ENCODE measurements at regions of chr20 and their contacts with region 1.

Region 1: DNA sequence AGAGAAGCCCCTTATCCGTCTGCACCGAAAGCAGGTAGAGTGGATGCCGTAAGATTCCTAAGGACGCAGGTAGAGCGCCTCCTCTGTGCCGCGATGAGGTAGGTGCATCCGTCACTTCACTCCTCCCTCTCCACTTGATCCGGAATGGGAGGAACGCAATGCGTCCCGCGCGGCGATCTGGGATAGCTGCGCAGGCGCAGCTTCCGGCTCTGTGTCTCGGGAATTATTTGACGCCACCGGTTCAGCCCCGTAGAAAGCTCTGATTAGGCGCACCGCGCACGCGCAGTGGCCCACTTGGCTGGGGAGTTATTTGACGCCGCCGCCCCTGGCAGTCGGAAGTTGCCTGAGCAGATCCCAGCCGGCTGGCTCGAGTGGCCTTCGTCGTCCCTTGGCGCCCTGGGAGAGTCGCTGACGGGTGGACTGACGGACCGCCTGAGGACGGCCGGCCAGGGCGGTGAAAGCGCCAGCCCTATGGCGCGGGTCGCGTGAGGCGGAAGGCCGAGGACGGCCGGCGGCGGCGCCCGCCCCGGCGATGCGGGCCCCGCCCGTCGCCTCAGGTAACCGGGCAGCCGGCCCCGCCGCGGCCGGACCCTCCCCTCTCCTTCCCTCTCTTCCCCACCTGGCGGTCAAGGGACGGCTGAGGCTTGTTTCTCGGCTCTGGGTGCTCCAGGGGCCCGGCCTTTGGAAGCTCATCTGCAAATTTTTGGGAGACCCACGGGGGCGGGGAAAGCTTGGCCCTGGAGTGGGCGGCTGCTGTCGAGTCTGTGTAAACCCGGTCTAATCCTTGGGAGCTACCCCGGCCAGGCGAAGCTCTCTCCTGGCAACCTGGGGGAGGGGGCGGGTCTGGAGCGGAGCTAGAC is at the start of gene RALGAPB:
- DNase-seq: peak; percentile 96 to 100
- H3K4me3 ChIP-seq: peak within 1 kb of the TSS; percentile 93 to 99
- H3K27ac ChIP-seq: peak within 1 kb of the TSS; percentile 88 to 93
- H3K4me1 ChIP-seq: peaks cover 12 to 15% of the 10 kb centered on the region in 2 donors
- H3K27me3 ChIP-seq: no peaks in the 10 kb centered on the region
- CTCF ChIP-seq: peak in 2 of 3 experiments; percentile 43 to 46
- total RNA-seq, gene RALGAPB: 19.4 TPM

Region 2: DNA sequence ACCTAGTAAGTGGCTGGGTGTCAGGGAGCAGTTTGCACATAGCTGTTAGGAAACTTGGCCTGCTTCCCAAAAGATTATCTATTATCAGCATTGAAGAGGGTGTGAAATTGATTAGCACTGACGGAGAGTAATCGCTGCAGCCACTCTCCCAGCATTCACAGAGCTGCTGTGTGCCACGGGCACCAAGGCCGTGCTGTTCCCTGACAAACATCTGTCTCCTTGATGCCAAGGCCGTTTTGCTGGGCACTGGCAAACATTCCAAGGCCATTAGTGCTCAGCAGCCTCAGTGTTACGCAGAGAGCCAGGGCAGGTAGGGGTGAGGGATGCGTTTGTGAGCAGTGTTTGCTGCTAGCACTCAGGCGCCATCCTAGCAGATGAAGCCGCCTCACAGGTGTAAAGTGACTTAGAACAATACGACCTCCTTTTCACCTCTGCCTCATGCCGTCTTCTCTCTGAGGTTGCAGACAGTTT is 627.5 kb before region 1 on chr20:
- intact Hi-C with region 1: no loop called
- DNase-seq: no peak
- H3K4me3 ChIP-seq: no peak overlapping the region
- H3K27ac ChIP-seq: no peak overlapping the region
- H3K4me1 ChIP-seq: no peaks in the 10 kb centered on the region
- H3K27me3 ChIP-seq: no peaks in the 10 kb centered on the region
- CTCF ChIP-seq: no peak

Region 3: DNA sequence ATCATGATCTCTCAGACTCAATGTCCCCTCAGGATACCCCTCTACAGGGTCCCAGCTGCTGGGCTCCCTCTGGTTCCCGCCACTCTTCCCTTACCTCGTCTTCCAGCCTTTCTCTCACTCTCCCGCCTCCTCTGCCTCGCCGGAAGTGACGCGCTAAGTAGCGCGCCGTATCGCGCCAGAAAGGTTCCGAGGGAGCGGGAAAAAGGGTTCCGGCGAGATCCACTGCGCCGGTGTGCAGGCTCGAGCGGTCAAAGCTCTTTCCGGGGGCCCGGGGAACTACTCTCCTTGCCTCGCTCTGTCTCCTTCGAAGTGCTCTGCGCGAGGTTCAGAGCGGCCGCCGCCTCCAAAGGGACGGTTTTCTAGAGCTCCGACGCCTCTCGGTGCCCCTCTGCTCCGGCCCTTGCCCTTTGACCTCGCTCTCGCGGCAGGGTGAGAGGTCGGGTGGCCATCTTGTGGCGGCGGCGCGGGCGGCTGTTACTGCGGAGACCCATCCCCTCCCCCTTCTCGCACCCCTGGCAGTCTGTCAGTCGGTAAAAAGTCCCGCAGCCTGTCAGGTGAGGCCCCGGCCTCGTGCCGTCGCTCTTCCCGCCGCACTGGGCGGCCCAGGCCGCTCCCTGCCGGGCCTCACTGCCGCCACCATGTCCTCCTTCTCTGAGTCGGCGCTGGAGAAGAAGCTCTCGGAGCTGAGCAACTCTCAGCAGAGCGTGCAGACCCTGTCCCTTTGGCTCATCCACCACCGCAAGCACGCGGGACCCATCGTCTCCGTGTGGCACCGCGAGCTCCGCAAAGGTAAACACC is 439.2 kb before region 1 on chr20 and contains the starts of genes RPRD1B and TTI1:
- intact Hi-C with region 1: loop called (anchors 10 kb)
- DNase-seq: peak; percentile 60 to 95
- H3K4me3 ChIP-seq: peak within 1 kb of the TSS; percentile 95 to 100
- H3K27ac ChIP-seq: peak within 1 kb of the TSS; percentile 97
- H3K4me1 ChIP-seq: peaks cover 16 to 27% of the 10 kb centered on the region in 2 donors
- H3K27me3 ChIP-seq: no peaks in the 10 kb centered on the region
- CTCF ChIP-seq: no peak
- total RNA-seq, gene RPRD1B: 16.4 TPM
- total RNA-seq, gene TTI1: 18.0 TPM

Region 4: DNA sequence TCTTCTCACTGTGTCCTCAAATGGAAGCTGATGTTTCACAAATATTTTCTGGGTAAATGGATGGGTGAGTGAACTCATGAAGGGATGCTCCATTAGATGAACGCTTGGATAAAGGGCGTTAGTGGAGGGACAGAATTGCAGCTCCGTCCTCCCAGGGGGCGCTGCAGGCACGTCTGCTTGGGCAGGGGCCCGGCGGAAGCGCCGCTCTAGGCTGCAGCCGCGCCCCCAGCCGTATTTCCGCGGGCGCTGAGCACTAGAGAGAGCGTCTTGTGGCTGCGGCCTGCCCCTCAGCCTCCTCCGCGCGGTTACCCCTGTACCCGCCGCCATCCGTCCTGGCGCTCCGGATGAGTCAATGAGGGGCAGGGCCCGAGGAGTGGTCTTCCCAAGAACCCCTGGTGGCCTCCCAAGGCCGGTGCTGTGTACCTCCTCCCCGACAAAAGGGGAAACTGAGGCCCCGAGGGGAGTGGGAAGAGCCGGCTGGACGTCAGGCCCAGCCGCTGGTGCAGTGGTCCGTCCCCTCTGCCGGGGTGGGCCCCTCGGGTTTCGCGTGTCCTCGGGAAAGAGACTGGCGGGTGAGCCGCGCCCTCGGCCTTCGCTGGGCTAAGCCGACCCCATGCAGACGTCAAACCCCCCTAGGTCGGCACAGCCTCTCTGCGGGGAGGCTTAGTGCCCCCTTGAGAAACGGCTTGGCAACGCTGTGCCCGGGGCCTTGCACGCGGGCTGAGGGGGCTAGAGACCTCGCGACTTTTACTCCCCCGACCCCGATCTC is 26.1 kb before region 1 on chr20:
- intact Hi-C with region 1: loop called (anchors 1 kb)
- DNase-seq: peak; percentile 36 to 93
- H3K4me3 ChIP-seq: peak overlapping the region; percentile 91 to 97
- H3K27ac ChIP-seq: peak overlapping the region; percentile 83 to 93
- H3K4me1 ChIP-seq: peaks cover 4 to 10% of the 10 kb centered on the region in 2 donors
- H3K27me3 ChIP-seq: no peaks in the 10 kb centered on the region
- CTCF ChIP-seq: peak; percentile 88 to 98 (median 89)

Region 5: DNA sequence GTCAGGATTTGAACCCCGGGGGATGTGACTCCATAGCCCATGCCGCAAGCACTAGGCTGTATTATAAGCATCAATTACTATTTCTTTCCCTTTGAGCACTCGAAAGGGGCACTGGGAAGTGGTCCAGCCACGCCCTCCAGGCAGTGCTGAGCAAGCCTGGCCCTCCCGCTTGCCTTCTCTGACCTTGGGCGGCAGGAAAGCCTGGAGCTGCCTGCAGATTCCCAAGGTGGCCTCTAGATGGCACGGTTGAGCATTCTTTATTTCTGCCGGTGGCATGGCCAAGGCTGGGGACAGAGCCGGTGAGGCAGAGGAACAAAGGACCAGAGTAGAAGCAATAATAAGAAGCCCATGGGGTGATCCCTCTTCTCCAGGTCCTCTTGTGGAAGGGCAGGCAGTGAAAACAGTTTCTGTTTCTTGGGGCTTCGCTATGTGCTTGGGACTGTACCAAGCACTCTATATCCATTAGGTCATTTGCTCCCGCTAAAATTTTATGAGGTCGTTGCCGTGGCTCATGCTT is 160.9 kb after region 1 on chr20:
- intact Hi-C with region 1: no loop called
- DNase-seq: no peak
- H3K4me3 ChIP-seq: no peak overlapping the region
- H3K27ac ChIP-seq: no peak overlapping the region
- H3K4me1 ChIP-seq: no peaks in the 10 kb centered on the region
- H3K27me3 ChIP-seq: no peaks in the 10 kb centered on the region
- CTCF ChIP-seq: peak in 2 of 3 experiments; percentile 82 to 83

Measured in ascending aorta (tissue), 2 donors.